Cardiac septum (tissue), 1 donor: ENCODE measurements at regions of chr4 and their contacts with region 1.

Region 1: GRCh38 chr4:121370729-121371325 is 10.0 kb downstream of the QRFPR start:
- DNase-seq: no peak

Region 2: GRCh38 chr4:121421594-121421993 is 50.8 kb after region 1 on chr4:
- intact Hi-C with region 1: loop called (anchors 2 kb)
- DNase-seq: no peak

Region 3: GRCh38 chr4:121736735-121737351 is 366.0 kb after region 1 on chr4:
- intact Hi-C with region 1: loop called (anchors 5 kb)
- DNase-seq: no peak